Vagina (tissue), 2 donors: ENCODE measurements at regions of chr15 and their contacts with region 1.

Region 1: GRCh38 chr15:31435261-31435911 is 108.8 kb downstream of the KLF13 start:
- DNase-seq: peak in 1 of 2 donors; percentile 95
- H3K4me3 ChIP-seq: peak overlapping the region; percentile 4
- H3K27ac ChIP-seq: peak overlapping the region; percentile 91
- H3K4me1 ChIP-seq: peaks cover 46% of the 10 kb centered on the region
- H3K27me3 ChIP-seq: no peaks in the 10 kb centered on the region
- CTCF ChIP-seq: peak; percentile 38 to 61 (median 44)
- POLR2A ChIP-seq: no peak

Region 2: DNA sequence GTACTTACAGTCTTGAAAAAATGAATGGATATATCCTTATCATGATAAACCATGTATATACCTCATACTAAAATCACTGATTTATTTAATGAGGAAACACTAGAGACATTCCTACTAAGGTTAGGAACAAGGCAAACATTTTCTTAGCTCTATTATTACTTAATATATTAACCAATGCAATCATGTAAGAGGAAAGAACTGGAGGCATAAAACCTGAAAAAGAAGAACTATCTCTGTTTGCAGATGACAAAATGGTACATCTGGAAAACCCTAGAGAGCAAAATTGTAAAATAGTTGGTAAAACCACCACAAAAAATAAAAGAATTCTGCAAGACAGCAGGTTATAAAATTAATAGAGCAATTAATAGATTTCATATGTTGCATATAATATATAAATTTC is 27.5 kb before region 1 on chr15:
- intact Hi-C with region 1: loop called (anchors 2 kb)
- DNase-seq: no peak
- H3K4me3 ChIP-seq: no peak overlapping the region
- H3K27ac ChIP-seq: no peak overlapping the region
- H3K4me1 ChIP-seq: no peaks in the 10 kb centered on the region
- H3K27me3 ChIP-seq: no peaks in the 10 kb centered on the region
- CTCF ChIP-seq: no peak
- POLR2A ChIP-seq: no peak